CD8-positive, alpha-beta T cell (primary cell): ENCODE measurements at regions of chr16 and their contacts with region 1.

Region 1: GRCh38 chr16:20741554-20742285 is at the start of gene THUMPD1:
- DNase-seq: peak; percentile 96 to 99 (median 97)
- ATAC-seq: peak; percentile 94
- H3K4me3 ChIP-seq: peak within 1 kb of the TSS; percentile 100
- H3K4me3 Mint-ChIP-seq: peak within 1 kb of the TSS; percentile 98
- H3K27ac ChIP-seq: peak within 1 kb of the TSS; percentile 100
- H3K27ac Mint-ChIP-seq: peak within 1 kb of the TSS; percentile 99
- H3K4me1 ChIP-seq: peaks cover 27% of the 10 kb centered on the region
- H3K4me1 Mint-ChIP-seq: peaks cover 26% of the 10 kb centered on the region
- H3K27me3 ChIP-seq: no peaks in the 10 kb centered on the region
- H3K27me3 Mint-ChIP-seq: no peaks in the 10 kb centered on the region
- CTCF ChIP-seq: peak; percentile 23
- total RNA-seq, gene THUMPD1: 105 to 109 TPM

Region 2: GRCh38 chr16:18789850-18790724 is 1951.6 kb before region 1 on chr16 and contains the start of gene RPS15A:
- CTCF ChIA-PET with region 1: no interaction called
- POLR2A ChIA-PET with region 1: no interaction called
- intact Hi-C with region 1: loop called in 1 of 2 experiments (anchors 10 kb)
- DNase-seq: peak; percentile 81 to 99 (median 91)
- ATAC-seq: peak; percentile 96
- H3K4me3 ChIP-seq: peak within 1 kb of the TSS; percentile 98 to 100
- H3K4me3 Mint-ChIP-seq: peak within 1 kb of the TSS; percentile 95
- H3K27ac ChIP-seq: peak within 1 kb of the TSS; percentile 76 to 88
- H3K27ac Mint-ChIP-seq: peak within 1 kb of the TSS; percentile 88
- H3K4me1 ChIP-seq: peaks cover 39% of the 10 kb centered on the region
- H3K4me1 Mint-ChIP-seq: peaks cover 50% of the 10 kb centered on the region
- H3K27me3 ChIP-seq: no peaks in the 10 kb centered on the region
- H3K27me3 Mint-ChIP-seq: no peaks in the 10 kb centered on the region
- CTCF ChIP-seq: no peak
- total RNA-seq, gene RPS15A: 3,671 to 3,755 TPM

Region 3: GRCh38 chr16:19521471-19522396 is 1220.0 kb before region 1 on chr16 and contains the start of gene GDE1:
- CTCF ChIA-PET with region 1: no interaction called
- POLR2A ChIA-PET with region 1: no interaction called
- intact Hi-C with region 1: loop called in 1 of 2 experiments (anchors 2 kb)
- DNase-seq: peak; percentile 76 to 96 (median 92)
- ATAC-seq: peak; percentile 74
- H3K4me3 ChIP-seq: peak within 1 kb of the TSS; percentile 62 to 85
- H3K4me3 Mint-ChIP-seq: peak within 1 kb of the TSS; percentile 93
- H3K27ac ChIP-seq: peak within 1 kb of the TSS; percentile 67 to 77
- H3K27ac Mint-ChIP-seq: peak within 1 kb of the TSS; percentile 92
- H3K4me1 ChIP-seq: peaks cover 32% of the 10 kb centered on the region
- H3K4me1 Mint-ChIP-seq: peaks cover 61% of the 10 kb centered on the region
- H3K27me3 ChIP-seq: no peaks in the 10 kb centered on the region
- H3K27me3 Mint-ChIP-seq: no peaks in the 10 kb centered on the region
- CTCF ChIP-seq: peak; percentile 22
- total RNA-seq, gene GDE1: 26.2 to 29.0 TPM

Region 4: DNA sequence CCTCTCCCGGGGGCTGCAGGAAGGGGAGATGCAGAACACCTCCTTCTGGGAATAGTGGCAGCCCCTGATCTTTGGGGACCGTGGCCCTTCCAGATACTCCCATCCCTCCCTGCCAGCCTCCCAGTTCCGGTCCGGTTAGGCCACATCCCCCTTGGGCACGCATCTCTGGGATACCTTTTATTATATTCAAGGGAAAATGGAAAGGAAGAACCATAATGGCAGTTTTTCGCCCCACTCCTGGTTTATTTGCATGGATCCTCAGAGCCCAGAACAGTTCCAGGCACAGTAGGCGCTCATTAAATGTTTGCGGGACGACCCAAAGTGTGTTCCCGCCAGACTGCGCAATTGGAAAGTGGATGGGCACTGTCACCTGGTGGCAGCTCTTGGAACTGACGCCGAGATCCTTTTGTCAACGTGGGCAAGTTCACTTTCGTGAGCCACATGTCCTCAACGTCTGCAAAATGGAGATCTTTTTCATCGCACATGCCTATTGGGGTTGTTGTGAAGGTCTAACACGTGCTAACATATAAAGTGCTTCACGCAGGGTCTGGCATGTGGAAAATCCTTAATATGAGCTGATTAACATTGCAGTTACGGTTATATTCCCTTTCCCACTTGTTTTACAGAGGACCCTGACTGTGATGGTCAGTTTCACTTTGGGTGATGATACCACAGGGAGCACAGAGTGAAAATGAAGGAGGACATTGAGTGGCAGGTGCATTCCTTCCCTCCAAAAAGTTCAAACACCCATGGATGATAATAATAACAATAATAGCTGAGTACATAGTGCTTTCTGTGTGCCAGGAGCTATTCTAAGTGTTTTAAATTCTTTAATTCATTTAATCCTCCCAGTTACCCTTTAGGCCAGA is 855.4 kb before region 1 on chr16:
- CTCF ChIA-PET with region 1: no interaction called
- POLR2A ChIA-PET with region 1: no interaction called
- intact Hi-C with region 1: loop called in 1 of 2 experiments (anchors 10 kb)
- DNase-seq: peak; percentile 64 to 85 (median 79)
- ATAC-seq: peak; percentile 65
- H3K4me3 ChIP-seq: peak overlapping the region in 1 of 2 experiments; percentile 72
- H3K4me3 Mint-ChIP-seq: peak overlapping the region; percentile 84
- H3K27ac ChIP-seq: no peak overlapping the region
- H3K27ac Mint-ChIP-seq: no peak overlapping the region
- H3K4me1 ChIP-seq: peaks cover 31% of the 10 kb centered on the region
- H3K4me1 Mint-ChIP-seq: peaks cover 24% of the 10 kb centered on the region
- H3K27me3 ChIP-seq: peaks cover 17 to 29% of the 10 kb centered on the region in 2 experiments
- H3K27me3 Mint-ChIP-seq: peaks cover 36% of the 10 kb centered on the region
- CTCF ChIP-seq: peak; percentile 97

Region 5: GRCh38 chr16:20695024-20695423 is 46.7 kb before region 1 on chr16:
- CTCF ChIA-PET with region 1: no interaction called
- POLR2A ChIA-PET with region 1: no interaction called
- intact Hi-C with region 1: no loop called
- DNase-seq: no peak
- ATAC-seq: no peak
- H3K4me3 ChIP-seq: no peak overlapping the region
- H3K4me3 Mint-ChIP-seq: no peak overlapping the region
- H3K27ac ChIP-seq: no peak overlapping the region
- H3K27ac Mint-ChIP-seq: no peak overlapping the region
- H3K4me1 ChIP-seq: no peaks in the 10 kb centered on the region
- H3K4me1 Mint-ChIP-seq: no peaks in the 10 kb centered on the region
- H3K27me3 ChIP-seq: no peaks in the 10 kb centered on the region
- H3K27me3 Mint-ChIP-seq: peaks cover 17% of the 10 kb centered on the region
- CTCF ChIP-seq: no peak

Region 6: GRCh38 chr16:20806168-20807050 is 64.7 kb after region 1 on chr16 and contains the starts of genes ERI2 and REXO5:
- CTCF ChIA-PET with region 1: no interaction called
- POLR2A ChIA-PET with region 1: no interaction called
- intact Hi-C with region 1: loop called (anchors 2 to 5 kb)
- DNase-seq: peak; percentile 43 to 85 (median 74)
- ATAC-seq: peak; percentile 91
- H3K4me3 ChIP-seq: peak within 1 kb of the TSS; percentile 75 to 77
- H3K4me3 Mint-ChIP-seq: peak within 1 kb of the TSS; percentile 98
- H3K27ac ChIP-seq: peak within 1 kb of the TSS; percentile 42 to 77
- H3K27ac Mint-ChIP-seq: peak within 1 kb of the TSS; percentile 82
- H3K4me1 ChIP-seq: peaks cover 10% of the 10 kb centered on the region
- H3K4me1 Mint-ChIP-seq: peaks cover 18% of the 10 kb centered on the region
- H3K27me3 ChIP-seq: no peaks in the 10 kb centered on the region
- H3K27me3 Mint-ChIP-seq: no peaks in the 10 kb centered on the region
- CTCF ChIP-seq: peak; percentile 21
- total RNA-seq, gene ERI2: 0.14 TPM in 1 of 2 experiments, not detected in the other
- total RNA-seq, gene REXO5: 0.38 to 0.42 TPM

Region 7: GRCh38 chr16:20900299-20901067 is 158.8 kb after region 1 on chr16 and contains the starts of genes DCUN1D3 and LYRM1:
- CTCF ChIA-PET with region 1: no interaction called
- POLR2A ChIA-PET with region 1: no interaction called
- intact Hi-C with region 1: loop called in 1 of 2 experiments (anchors 1 kb)
- DNase-seq: peak; percentile 63 to 96 (median 85)
- ATAC-seq: peak; percentile 73
- H3K4me3 ChIP-seq: peak within 1 kb of the TSS; percentile 80 to 95
- H3K4me3 Mint-ChIP-seq: peak within 1 kb of the TSS; percentile 96
- H3K27ac ChIP-seq: peak within 1 kb of the TSS; percentile 93 to 99
- H3K27ac Mint-ChIP-seq: peak within 1 kb of the TSS; percentile 98
- H3K4me1 ChIP-seq: peaks cover 40% of the 10 kb centered on the region
- H3K4me1 Mint-ChIP-seq: peaks cover 69% of the 10 kb centered on the region
- H3K27me3 ChIP-seq: no peaks in the 10 kb centered on the region
- H3K27me3 Mint-ChIP-seq: no peaks in the 10 kb centered on the region
- CTCF ChIP-seq: no peak
- total RNA-seq, gene DCUN1D3: 2.3 to 2.6 TPM
- total RNA-seq, gene LYRM1: 12.4 to 12.7 TPM

Region 8: GRCh38 chr16:21523411-21524067 is 781.8 kb after region 1 on chr16:
- CTCF ChIA-PET with region 1: no interaction called
- POLR2A ChIA-PET with region 1: no interaction called
- intact Hi-C with region 1: loop called in 1 of 2 experiments (anchors 10 kb)
- DNase-seq: no peak
- ATAC-seq: no peak
- H3K4me3 ChIP-seq: no peak overlapping the region
- H3K4me3 Mint-ChIP-seq: no peak overlapping the region
- H3K27ac ChIP-seq: no peak overlapping the region
- H3K27ac Mint-ChIP-seq: no peak overlapping the region
- H3K4me1 ChIP-seq: no peaks in the 10 kb centered on the region
- H3K4me1 Mint-ChIP-seq: peaks cover 8% of the 10 kb centered on the region
- H3K27me3 ChIP-seq: no peaks in the 10 kb centered on the region
- H3K27me3 Mint-ChIP-seq: no peaks in the 10 kb centered on the region
- CTCF ChIP-seq: no peak